ENCODE measurements at regions of chr16 and their contacts with region 1.

Region 1: DNA sequence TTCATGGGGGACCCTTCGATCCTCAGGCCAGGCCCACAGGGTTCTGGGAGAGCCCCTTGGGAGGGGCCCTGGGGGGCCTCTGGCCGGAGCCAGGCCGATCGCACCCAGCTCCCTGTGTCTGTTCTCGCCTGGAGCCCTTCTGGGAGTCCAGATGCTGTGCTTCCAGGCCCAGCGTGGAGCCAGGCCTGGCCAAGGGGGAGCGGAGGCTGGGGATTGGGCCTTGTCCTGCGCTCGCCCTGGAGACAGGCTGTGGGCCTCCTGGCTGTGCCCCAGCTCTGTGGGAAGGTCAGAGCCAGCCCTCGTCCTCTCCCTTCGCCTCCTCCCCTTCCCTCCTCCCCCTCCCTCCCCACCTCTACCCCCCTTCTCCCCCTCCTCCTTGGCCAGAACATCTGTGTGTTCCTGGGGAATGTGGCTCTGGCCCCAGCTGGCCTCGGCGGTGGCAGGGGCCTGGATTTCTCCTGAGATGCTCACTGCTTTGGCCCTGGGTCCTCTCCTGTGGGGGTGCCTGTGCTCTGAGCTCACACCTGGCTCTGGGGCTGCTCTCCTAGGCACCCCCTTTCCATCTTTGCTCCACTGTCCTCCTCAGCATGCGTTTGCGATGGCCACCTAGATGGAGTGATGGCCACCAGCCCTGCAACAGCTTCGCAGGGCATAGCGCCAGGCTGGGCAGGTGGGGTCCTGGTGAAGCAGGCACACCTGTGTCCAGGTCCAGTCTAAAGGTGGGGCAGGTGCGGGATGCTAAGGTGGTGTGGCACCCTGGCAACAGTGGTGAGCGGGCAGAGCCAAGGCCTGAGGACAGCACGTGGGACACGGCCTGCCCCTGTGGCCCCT is 90.6 kb upstream of the CIBAR2 start:
- DNase-seq: no peak
- H3K4me3 ChIP-seq: no peak overlapping the region
- H3K27ac ChIP-seq: peak overlapping the region in 1 of 2 donors; percentile 26
- H3K4me1 ChIP-seq: peaks cover 4% of the 10 kb centered on the region
- H3K27me3 ChIP-seq: peaks cover 2% of the 10 kb centered on the region
- CTCF ChIP-seq: no peak
- POLR2A ChIP-seq: no peak

Region 2: DNA sequence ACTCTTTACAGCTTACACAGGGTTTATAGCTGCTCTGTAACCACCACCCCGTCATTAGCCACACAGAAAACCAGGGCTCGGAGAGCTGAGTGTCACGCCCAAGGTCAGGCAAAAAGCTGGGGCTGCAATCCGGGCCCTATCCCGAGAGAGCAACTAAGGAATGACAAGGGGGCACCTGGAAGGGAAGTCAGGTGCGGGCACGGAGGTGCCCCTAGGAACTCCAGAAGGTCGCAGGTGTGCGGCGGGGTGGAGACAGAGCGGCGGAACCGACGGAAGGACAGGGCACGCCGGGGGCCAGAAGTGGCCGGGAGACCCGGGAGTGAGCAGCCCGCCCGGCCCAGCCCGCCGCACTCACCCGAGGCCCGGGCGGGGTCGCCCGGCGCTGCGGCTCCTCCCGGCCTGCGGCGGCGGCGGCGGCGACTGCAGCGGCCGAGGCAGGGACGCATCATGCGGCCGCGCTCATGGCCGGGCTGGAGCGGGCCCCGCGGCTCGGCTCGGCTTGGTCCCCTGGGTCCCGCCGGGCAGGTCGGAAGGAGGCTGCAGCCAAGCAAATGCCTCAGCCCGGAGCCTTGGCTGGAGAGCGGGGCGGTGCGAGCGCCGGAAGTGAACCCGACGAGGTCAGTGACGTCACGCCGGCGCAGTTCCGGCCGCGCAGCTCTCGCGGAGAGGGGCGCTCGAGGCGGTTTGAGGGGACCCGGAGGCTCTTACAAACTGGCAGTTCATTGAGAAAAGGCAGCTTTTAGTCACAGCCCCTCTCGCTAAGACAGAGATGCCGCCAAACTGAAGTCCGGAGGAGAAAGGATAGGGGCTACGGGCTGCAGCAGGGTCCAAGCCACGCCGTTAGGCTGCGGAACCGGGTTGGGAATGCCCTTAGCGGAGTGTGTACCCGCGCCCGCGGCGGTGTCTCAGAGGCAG is 191.7 kb before region 1 on chr16 and contains the start of gene ZDHHC7:
- intact Hi-C with region 1: no loop called
- DNase-seq: peak; percentile 82
- H3K4me3 ChIP-seq: peak within 1 kb of the TSS; percentile 71 to 85
- H3K27ac ChIP-seq: peak within 1 kb of the TSS; percentile 96 to 98
- H3K4me1 ChIP-seq: peaks cover 6% of the 10 kb centered on the region
- H3K27me3 ChIP-seq: no peaks in the 10 kb centered on the region
- CTCF ChIP-seq: peak in 2 of 4 experiments; percentile 14 to 36
- POLR2A ChIP-seq: peak; percentile 88
- total RNA-seq, gene ZDHHC7: 64.6 TPM

Region 3: DNA sequence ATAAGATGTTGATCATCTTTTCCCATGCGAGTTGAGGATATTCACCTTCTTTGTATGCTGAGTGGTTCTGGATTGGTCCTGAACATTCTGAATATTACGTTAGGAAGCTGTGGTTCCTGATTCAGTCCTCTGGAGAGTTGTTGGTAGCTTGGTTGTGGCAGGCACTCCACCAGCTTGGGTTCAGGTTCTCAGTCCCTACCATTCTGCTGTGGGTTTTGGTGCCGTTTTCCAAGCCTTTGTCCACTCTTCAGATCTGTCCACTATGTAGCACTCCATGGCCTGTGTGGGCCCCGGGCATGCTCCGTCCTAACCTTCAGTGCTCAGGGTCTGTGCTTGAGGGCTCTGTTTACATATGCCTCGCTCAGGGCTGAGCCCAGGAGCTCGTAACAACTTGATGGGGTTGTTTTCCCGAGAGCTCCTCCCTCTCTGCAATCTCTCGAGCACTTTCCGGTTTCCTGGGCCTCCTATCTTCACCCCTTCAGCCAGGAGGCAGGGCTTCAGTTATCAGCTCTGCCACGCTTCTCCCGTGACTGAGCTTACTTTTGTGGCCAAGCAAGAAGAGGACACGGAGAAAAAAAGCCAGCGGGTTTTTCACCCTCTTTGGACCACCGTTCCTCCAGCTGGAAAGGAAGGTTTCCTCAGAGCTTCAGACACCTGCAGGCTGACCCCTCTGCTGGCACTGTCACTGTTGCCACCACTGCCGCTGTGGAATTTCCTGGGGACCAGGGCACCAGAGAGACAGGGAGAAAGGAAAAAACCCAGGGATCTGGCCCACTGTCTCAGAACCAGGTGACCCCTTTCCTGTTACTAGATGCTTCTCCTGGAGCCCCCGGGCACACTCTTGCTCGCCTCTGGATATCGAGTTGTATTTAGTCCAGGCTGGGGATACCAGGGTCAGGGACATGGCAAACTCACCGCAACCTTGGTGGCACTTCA is 155.6 kb before region 1 on chr16:
- intact Hi-C with region 1: no loop called
- DNase-seq: peak; percentile 52
- H3K4me3 ChIP-seq: no peak overlapping the region
- H3K27ac ChIP-seq: peak overlapping the region in 1 of 2 donors; percentile 66
- H3K4me1 ChIP-seq: peaks cover 7% of the 10 kb centered on the region
- H3K27me3 ChIP-seq: no peaks in the 10 kb centered on the region
- CTCF ChIP-seq: no peak
- POLR2A ChIP-seq: no peak

Region 4: DNA sequence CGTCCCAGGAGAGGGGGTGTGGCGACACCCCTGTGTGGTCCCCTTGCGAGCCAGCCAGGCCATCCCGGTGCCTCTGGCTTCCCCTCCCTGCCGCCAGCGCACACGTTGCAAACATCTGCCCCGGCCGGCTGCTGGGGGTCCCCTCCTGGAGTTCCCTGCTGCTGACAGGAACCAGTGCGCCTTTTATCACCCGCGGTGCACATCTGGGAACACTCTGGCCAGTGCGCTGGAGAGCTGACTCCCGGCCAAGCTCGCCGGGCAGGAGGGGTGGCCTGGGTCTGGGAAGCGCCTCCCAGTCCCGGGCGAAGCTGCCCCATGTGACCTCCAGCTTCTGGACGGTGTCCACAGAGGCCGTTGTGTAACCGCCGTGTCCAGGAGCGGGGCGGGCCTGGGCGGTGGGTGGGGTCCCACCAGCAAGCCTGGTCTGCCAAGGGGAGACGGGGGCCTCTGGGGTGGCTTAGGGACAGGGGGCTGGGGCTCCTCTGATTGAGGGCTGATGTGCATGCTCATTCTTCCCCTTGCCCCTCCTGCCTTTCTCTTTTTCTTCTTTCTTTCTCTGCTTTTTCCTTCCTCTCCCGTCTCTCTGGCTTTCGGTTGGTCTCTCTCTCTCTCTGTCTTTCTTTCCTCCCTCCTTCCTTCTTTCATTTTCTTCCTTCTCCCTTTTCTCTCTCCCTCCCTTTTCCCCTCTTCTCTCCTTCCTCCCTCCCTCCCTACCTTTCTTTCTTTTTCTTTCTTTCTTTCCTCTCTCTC is 65.3 kb before region 1 on chr16:
- intact Hi-C with region 1: loop called (anchors 5 kb)
- DNase-seq: peak; percentile 81
- H3K4me3 ChIP-seq: peak overlapping the region in 1 of 2 donors; percentile 6
- H3K27ac ChIP-seq: peak overlapping the region in 1 of 2 donors; percentile 4
- H3K4me1 ChIP-seq: peaks cover 5% of the 10 kb centered on the region
- H3K27me3 ChIP-seq: no peaks in the 10 kb centered on the region
- CTCF ChIP-seq: no peak
- POLR2A ChIP-seq: no peak

Region 5: GRCh38 chr16:85234310-85235204 is 31.7 kb after region 1 on chr16:
- intact Hi-C with region 1: loop called (anchors 5 kb)
- DNase-seq: no peak
- H3K4me3 ChIP-seq: peak overlapping the region in 1 of 2 donors; percentile 7
- H3K27ac ChIP-seq: peak overlapping the region; percentile 58 to 63
- H3K4me1 ChIP-seq: peaks cover 13% of the 10 kb centered on the region
- H3K27me3 ChIP-seq: no peaks in the 10 kb centered on the region
- CTCF ChIP-seq: no peak
- POLR2A ChIP-seq: no peak